GM12878 (cell line): ENCODE measurements at regions of chr4 and their contacts with region 1.

Region 1: GRCh38 chr4:22595684-22596083 is 79.8 kb upstream of the ADGRA3 start:
- DNase-seq: peak; percentile 17
- ATAC-seq: peak; percentile 84
- H3K4me3 ChIP-seq: no peak overlapping the region
- H3K27ac ChIP-seq: no peak overlapping the region
- H3K4me1 ChIP-seq: no peaks in the 10 kb centered on the region
- H3K27me3 ChIP-seq: no peaks in the 10 kb centered on the region
- CTCF ChIP-seq: no peak
- EP300 ChIP-seq: peak; percentile 58 to 75; a peak in 2 of 4 replicates
- POLR2A ChIP-seq: no peak
- RAD21 ChIP-seq: no peak

Region 2: GRCh38 chr4:21780158-21780557 is 815.5 kb before region 1 on chr4:
- CTCF ChIA-PET with region 1: no interaction called
- POLR2A ChIA-PET with region 1: no interaction called
- RAD21 ChIA-PET with region 1: no interaction called
- SMC1A ChIA-PET with region 1: no interaction called
- in situ Hi-C with region 1: no loop called
- intact Hi-C with region 1: no loop called
- DNase-seq: no peak
- ATAC-seq: no peak
- H3K4me3 ChIP-seq: no peak overlapping the region
- H3K27ac ChIP-seq: no peak overlapping the region
- H3K4me1 ChIP-seq: no peaks in the 10 kb centered on the region
- H3K27me3 ChIP-seq: no peaks in the 10 kb centered on the region
- CTCF ChIP-seq: no peak
- EP300 ChIP-seq: no peak
- POLR2A ChIP-seq: no peak
- RAD21 ChIP-seq: no peak

Region 3: GRCh38 chr4:22508379-22508778 is 87.3 kb before region 1 on chr4:
- CTCF ChIA-PET with region 1: interaction called, 3 read pairs
- POLR2A ChIA-PET with region 1: interaction called, 11 read pairs
- RAD21 ChIA-PET with region 1: interaction called, 15 read pairs
- SMC1A ChIA-PET with region 1: interaction called, 12 read pairs
- in situ Hi-C with region 1: no loop called
- intact Hi-C with region 1: loop called (anchors 5 kb)
- DNase-seq: no peak
- ATAC-seq: no peak
- H3K4me3 ChIP-seq: no peak overlapping the region
- H3K27ac ChIP-seq: no peak overlapping the region
- H3K4me1 ChIP-seq: no peaks in the 10 kb centered on the region
- H3K27me3 ChIP-seq: no peaks in the 10 kb centered on the region
- CTCF ChIP-seq: no peak
- EP300 ChIP-seq: no peak
- POLR2A ChIP-seq: no peak
- RAD21 ChIP-seq: no peak

Region 4: DNA sequence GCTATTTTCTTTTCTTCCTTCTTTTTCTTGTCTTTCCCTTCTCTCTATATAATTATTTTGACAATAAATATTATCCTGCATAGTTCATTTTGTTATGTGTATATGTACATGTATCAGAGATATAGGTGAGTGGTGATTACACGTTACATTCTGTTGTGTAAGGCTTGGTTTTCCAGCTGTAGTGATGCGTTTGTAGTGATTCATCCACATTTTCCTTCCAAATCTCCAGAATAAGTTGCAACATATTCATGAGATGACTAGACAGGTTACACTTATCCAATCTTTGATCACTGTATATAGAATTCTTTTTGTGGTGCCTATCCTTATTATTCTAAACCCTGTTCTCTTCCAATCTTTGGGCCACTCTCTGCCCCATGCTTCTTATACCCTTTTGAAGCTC is 637.3 kb after region 1 on chr4:
- CTCF ChIA-PET with region 1: no interaction called
- POLR2A ChIA-PET with region 1: no interaction called
- RAD21 ChIA-PET with region 1: no interaction called
- SMC1A ChIA-PET with region 1: no interaction called
- in situ Hi-C with region 1: no loop called
- intact Hi-C with region 1: no loop called
- DNase-seq: no peak
- ATAC-seq: no peak
- H3K4me3 ChIP-seq: no peak overlapping the region
- H3K27ac ChIP-seq: no peak overlapping the region
- H3K4me1 ChIP-seq: no peaks in the 10 kb centered on the region
- H3K27me3 ChIP-seq: no peaks in the 10 kb centered on the region
- CTCF ChIP-seq: no peak
- EP300 ChIP-seq: no peak
- POLR2A ChIP-seq: no peak
- RAD21 ChIP-seq: no peak